Gastrocnemius medialis (tissue), 4 donors: ENCODE measurements at regions of chr18 and their contacts with region 1.

Region 1: DNA sequence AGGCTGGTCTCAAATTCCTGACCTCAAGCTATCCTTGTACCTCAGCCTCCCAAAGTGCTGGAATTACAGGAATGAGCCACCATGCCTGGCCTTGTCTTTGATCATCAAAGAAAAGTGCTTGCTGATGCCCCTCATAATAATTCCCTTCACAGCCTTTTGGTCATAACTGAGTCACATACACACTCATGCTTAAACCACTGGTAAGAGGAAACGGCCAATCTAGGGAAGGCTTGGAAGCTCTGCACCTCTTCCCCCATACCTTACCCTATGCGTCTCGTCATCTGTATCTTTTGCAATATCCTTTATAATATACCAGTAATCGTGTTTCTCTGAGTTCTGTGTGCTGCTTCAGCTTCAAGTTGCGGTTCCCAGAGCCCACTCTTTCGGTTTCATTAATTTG is 4.8 kb upstream of the RNF138 start:
- DNase-seq: no peak
- ATAC-seq: no peak
- H3K4me3 ChIP-seq: no peak overlapping the region
- H3K27ac ChIP-seq: no peak overlapping the region
- H3K4me1 ChIP-seq: peaks cover 6% of the 10 kb centered on the region in 2 donors
- H3K27me3 ChIP-seq: no peaks in the 10 kb centered on the region
- CTCF ChIP-seq: no peak
- POLR2A ChIP-seq: no peak

Region 2: GRCh38 chr18:31954349-31954748 is 132.5 kb before region 1 on chr18:
- in situ Hi-C with region 1: loop called in 3 of 4 experiments (anchors 10 to 25 kb)
- intact Hi-C with region 1: no loop called
- DNase-seq: no peak
- ATAC-seq: no peak
- H3K4me3 ChIP-seq: no peak overlapping the region
- H3K27ac ChIP-seq: no peak overlapping the region
- H3K4me1 ChIP-seq: no peaks in the 10 kb centered on the region
- H3K27me3 ChIP-seq: no peaks in the 10 kb centered on the region
- CTCF ChIP-seq: no peak
- POLR2A ChIP-seq: no peak

Region 3: GRCh38 chr18:32048507-32049091 is 38.3 kb before region 1 on chr18:
- in situ Hi-C with region 1: no loop called
- intact Hi-C with region 1: no loop called
- DNase-seq: peak; percentile 19 to 41
- ATAC-seq: peak; percentile 61 to 66
- H3K4me3 ChIP-seq: no peak overlapping the region
- H3K27ac ChIP-seq: peak overlapping the region in 3 of 4 donors; percentile 32 to 56 (median 37)
- H3K4me1 ChIP-seq: peaks cover 0 to 3% of the 10 kb centered on the region in 2 donors
- H3K27me3 ChIP-seq: no peaks in the 10 kb centered on the region
- CTCF ChIP-seq: no peak
- POLR2A ChIP-seq: no peak

Region 4: DNA sequence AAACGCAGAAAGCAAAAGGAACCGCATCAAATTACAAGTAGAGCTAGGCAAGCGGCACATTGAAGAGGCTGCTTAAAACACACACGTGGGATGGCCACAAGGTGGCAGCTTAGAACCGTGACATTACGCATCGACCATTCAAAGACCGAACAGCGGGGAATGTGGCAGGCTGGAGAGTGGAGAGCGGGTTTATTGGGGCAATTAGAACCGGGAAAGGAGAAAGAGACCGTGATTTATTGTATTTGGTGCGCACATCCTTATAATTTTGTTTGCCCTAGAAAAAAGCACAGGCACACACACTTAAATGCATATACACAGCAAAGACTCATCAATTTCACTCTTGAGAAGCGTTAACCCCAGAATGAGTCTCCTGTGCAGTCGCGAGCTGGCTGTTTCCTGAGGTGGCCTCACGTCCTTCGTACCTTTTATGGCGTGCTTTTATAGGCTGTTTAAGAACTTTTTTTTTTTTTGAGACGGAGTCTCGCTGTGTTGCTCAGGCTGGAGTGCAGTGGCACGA is 71.3 kb after region 1 on chr18:
- in situ Hi-C with region 1: no loop called
- intact Hi-C with region 1: no loop called
- DNase-seq: peak; percentile 61 to 62
- ATAC-seq: peak; percentile 98
- H3K4me3 ChIP-seq: peak overlapping the region in 3 of 4 donors; percentile 34 to 42 (median 34)
- H3K27ac ChIP-seq: no peak overlapping the region
- H3K4me1 ChIP-seq: no peaks in the 10 kb centered on the region
- H3K27me3 ChIP-seq: no peaks in the 10 kb centered on the region
- CTCF ChIP-seq: peak; percentile 73 to 86 (median 81)
- POLR2A ChIP-seq: no peak